Mammary epithelial cell (primary cell): ENCODE measurements at regions of chr1 and their contacts with region 1.

Region 1: GRCh38 chr1:179002552-179003345 is 22.9 kb upstream of the FAM20B start:
- DNase-seq: peak; percentile 27
- H3K4me3 ChIP-seq: no peak overlapping the region
- H3K27ac ChIP-seq: no peak overlapping the region
- H3K4me1 ChIP-seq: no peaks in the 10 kb centered on the region
- H3K27me3 ChIP-seq: no peaks in the 10 kb centered on the region
- CTCF ChIP-seq: peak; percentile 81 to 96

Region 2: GRCh38 chr1:178310685-178311105 is 692.1 kb before region 1 on chr1:
- CTCF ChIA-PET with region 1: no interaction called
- dilution Hi-C with region 1: no loop called
- in situ Hi-C with region 1: no loop called
- intact Hi-C with region 1: loop called (anchors 10 kb)
- DNase-seq: peak; percentile 74
- H3K4me3 ChIP-seq: no peak overlapping the region
- H3K27ac ChIP-seq: peak overlapping the region; percentile 51
- H3K4me1 ChIP-seq: peaks cover 3% of the 10 kb centered on the region
- H3K27me3 ChIP-seq: no peaks in the 10 kb centered on the region
- CTCF ChIP-seq: peak; percentile 66 to 74

Region 3: GRCh38 chr1:178542560-178543356 is 460.0 kb before region 1 on chr1:
- CTCF ChIA-PET with region 1: interaction called, 4 read pairs
- dilution Hi-C with region 1: no loop called
- in situ Hi-C with region 1: loop called in 1 of 2 experiments (anchors 10 kb)
- intact Hi-C with region 1: loop called (anchors 1 kb)
- DNase-seq: peak; percentile 76
- H3K4me3 ChIP-seq: peak overlapping the region; percentile 49 to 85 (median 71)
- H3K27ac ChIP-seq: peak overlapping the region; percentile 17
- H3K4me1 ChIP-seq: peaks cover 20% of the 10 kb centered on the region
- H3K27me3 ChIP-seq: no peaks in the 10 kb centered on the region
- CTCF ChIP-seq: peak; percentile 73 to 90

Region 4: GRCh38 chr1:178768423-178768822 is 234.3 kb before region 1 on chr1:
- CTCF ChIA-PET with region 1: no interaction called
- dilution Hi-C with region 1: no loop called
- in situ Hi-C with region 1: loop called (anchors 10 to 25 kb)
- intact Hi-C with region 1: no loop called
- DNase-seq: no peak
- H3K4me3 ChIP-seq: no peak overlapping the region
- H3K27ac ChIP-seq: no peak overlapping the region
- H3K4me1 ChIP-seq: no peaks in the 10 kb centered on the region
- H3K27me3 ChIP-seq: no peaks in the 10 kb centered on the region
- CTCF ChIP-seq: peak; percentile 57 to 69

Region 5: DNA sequence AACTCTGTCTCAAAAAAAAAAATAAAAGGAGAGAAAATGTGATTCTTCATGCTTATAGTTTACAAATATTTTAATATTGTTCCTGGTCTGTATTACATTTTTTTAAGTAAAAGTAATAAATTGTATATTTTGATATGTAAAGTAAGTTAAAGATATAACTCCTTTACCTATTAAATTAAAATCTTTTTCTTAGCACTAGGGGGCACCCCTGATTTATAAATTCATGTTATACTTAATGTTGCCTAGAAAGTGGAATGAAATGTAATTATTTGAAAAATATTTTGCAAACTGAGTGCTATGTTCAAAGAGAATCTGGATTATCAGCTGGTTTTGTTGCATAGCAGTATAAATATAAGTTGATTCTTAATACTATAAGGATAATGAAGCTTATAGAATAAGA is 228.5 kb before region 1 on chr1:
- CTCF ChIA-PET with region 1: no interaction called
- dilution Hi-C with region 1: no loop called
- in situ Hi-C with region 1: loop called (anchors 10 to 25 kb)
- intact Hi-C with region 1: loop called (anchors 1 kb)
- DNase-seq: no peak
- H3K4me3 ChIP-seq: no peak overlapping the region
- H3K27ac ChIP-seq: no peak overlapping the region
- H3K4me1 ChIP-seq: no peaks in the 10 kb centered on the region
- H3K27me3 ChIP-seq: no peaks in the 10 kb centered on the region
- CTCF ChIP-seq: peak; percentile 34 to 39

Region 6: GRCh38 chr1:178938959-178939317 is 63.8 kb before region 1 on chr1:
- CTCF ChIA-PET with region 1: no interaction called
- dilution Hi-C with region 1: loop called (anchors 5 kb)
- in situ Hi-C with region 1: no loop called
- intact Hi-C with region 1: no loop called
- DNase-seq: no peak
- H3K4me3 ChIP-seq: no peak overlapping the region
- H3K27ac ChIP-seq: no peak overlapping the region
- H3K4me1 ChIP-seq: no peaks in the 10 kb centered on the region
- H3K27me3 ChIP-seq: no peaks in the 10 kb centered on the region
- CTCF ChIP-seq: no peak